ENCODE measurements at regions of chr12 and their contacts with region 1.

Region 1: DNA sequence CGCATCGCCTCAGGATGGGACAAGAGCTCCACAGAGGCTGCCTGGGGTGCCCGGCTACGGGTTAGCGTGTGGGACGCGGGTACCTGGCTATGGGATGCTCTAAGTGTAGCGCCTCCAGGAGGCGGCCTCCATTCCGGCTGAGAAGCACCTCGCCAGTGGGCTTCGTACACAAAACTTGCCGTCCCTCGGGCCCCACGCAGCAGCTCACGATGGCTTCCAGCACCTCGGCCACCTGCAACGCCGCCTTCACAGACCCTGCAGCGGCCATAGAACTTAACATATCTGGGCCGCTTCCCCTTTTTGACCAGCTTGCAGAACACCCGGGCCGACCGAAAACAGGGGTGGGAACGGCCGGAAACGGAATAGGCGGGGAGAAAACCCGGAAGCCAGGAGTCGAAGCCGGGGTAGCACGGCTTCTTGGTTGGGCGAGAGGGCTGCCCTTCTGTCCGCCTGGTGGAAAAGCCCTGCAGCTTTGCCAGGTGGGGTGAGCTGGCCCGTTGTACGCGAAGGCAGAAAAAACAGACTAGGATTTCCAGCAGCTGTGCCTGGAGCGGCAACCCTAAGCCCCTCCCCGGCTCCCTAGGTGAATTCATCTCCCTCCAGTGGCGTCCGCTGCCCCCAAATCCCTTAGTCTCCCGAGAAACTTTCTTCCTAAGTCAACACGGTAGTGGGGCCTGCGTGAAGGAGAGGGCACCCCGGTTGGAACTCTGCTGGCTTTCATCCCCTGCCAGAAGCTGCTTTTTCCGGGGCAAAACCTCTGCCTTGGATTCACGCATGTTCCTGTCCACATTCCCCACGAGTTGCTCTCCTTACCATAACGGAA is at the start of gene BBS10:
- DNase-seq: peak; percentile 87
- CTCF ChIP-seq: peak; percentile 41

Region 2: GRCh38 chr12:75526655-75527511 is 821.4 kb before region 1 on chr12:
- in situ Hi-C with region 1: loop called (anchors 25 kb)
- DNase-seq: peak; percentile 47
- CTCF ChIP-seq: peak; percentile 64

Region 3: GRCh38 chr12:76074701-76075336 is 273.5 kb before region 1 on chr12:
- in situ Hi-C with region 1: loop called (anchors 10 kb)
- DNase-seq: no peak
- CTCF ChIP-seq: no peak

Region 4: DNA sequence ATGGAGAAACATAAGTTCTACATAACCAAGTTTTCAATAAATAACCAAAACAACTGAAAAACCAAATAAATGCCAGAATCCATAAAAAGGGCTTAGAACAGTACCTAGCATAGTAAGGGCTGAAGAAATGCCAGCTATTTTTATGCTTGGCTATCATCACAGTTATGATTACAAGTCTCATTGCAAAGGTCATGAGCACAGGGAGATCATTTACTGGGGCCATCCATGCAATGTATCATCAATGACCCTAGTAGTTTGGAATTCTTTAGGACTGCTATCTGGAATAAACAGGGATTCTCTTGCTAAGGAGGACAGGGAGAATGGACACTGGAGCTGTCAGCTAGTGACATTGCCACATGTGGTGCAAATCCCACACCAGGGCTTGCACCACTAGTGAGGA is 171.3 kb before region 1 on chr12:
- in situ Hi-C with region 1: loop called (anchors 10 kb)
- DNase-seq: no peak
- CTCF ChIP-seq: no peak